ENCODE measurements at regions of chr4 and their contacts with region 1.

Region 1: GRCh38 chr4:75565481-75565880 is 9.6 kb downstream of the ODAPH start:
- DNase-seq: no peak
- H3K4me3 Mint-ChIP-seq: no peak overlapping the region
- H3K27ac Mint-ChIP-seq: no peak overlapping the region
- H3K4me1 Mint-ChIP-seq: peaks cover 5% of the 10 kb centered on the region
- H3K27me3 Mint-ChIP-seq: peaks cover 3% of the 10 kb centered on the region

Region 2: GRCh38 chr4:75542824-75543223 is 22.7 kb before region 1 on chr4:
- CTCF ChIA-PET with region 1: no interaction called
- DNase-seq: no peak
- H3K4me3 Mint-ChIP-seq: no peak overlapping the region
- H3K27ac Mint-ChIP-seq: no peak overlapping the region
- H3K4me1 Mint-ChIP-seq: no peaks in the 10 kb centered on the region
- H3K27me3 Mint-ChIP-seq: no peaks in the 10 kb centered on the region

Region 3: DNA sequence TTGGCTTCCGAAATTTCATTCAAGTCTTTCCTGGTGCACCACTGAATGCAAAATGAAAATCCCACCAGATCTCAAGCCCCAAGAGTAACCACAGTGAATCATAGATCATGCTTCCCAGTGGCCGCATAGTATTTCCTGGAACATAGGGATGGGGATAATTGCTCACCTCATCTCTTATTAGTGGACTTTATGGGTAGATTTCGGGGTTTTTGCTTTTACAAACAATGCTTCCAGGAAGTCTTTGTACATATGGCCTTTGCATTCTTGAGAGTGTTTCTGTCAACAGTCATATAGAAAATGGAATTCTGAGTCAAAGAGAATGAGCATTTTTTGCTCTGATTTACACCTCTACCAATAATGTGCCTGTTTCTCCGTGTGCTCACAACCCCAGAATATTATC is 283.4 kb after region 1 on chr4:
- CTCF ChIA-PET with region 1: interaction called, 11 read pairs
- DNase-seq: no peak
- H3K4me3 Mint-ChIP-seq: no peak overlapping the region
- H3K27ac Mint-ChIP-seq: no peak overlapping the region
- H3K4me1 Mint-ChIP-seq: peaks cover 5% of the 10 kb centered on the region
- H3K27me3 Mint-ChIP-seq: peaks cover 12% of the 10 kb centered on the region